ENCODE measurements at regions of chr15 and their contacts with region 1.

Region 1: GRCh38 chr15:65792130-65792987 is at the start of gene DENND4A:
- DNase-seq: peak; percentile 96 to 100 (median 98)

Region 2: GRCh38 chr15:65869127-65869953 is 77.0 kb after region 1 on chr15 and contains the start of gene RAB11A:
- intact Hi-C with region 1: loop called (anchors 5 kb)
- DNase-seq: peak; percentile 90 to 100 (median 96)